ENCODE measurements at regions of chr6 and their contacts with region 1.

Region 1: GRCh38 chr6:129498950-129499842 is 210.8 kb downstream of the ARHGAP18 start:
- DNase-seq: peak in 6 of 35 experiments; percentile 2 to 78 (median 9)
- ATAC-seq: peak; percentile 72 to 80 (median 74)
- H3K4me3 ChIP-seq: no peak overlapping the region
- H3K4me3 Mint-ChIP-seq: peak overlapping the region; percentile 28 to 64 (median 48)
- H3K27ac ChIP-seq: no peak overlapping the region
- H3K27ac Mint-ChIP-seq: peak overlapping the region in 1 of 2 donors; percentile 15
- H3K4me1 ChIP-seq: peaks cover 2 to 14% of the 10 kb centered on the region in 2 experiments
- H3K4me1 Mint-ChIP-seq: peaks cover 9 to 28% (median 22%) of the 10 kb centered on the region in 3 donors
- H3K27me3 ChIP-seq: no peaks in the 10 kb centered on the region
- H3K27me3 Mint-ChIP-seq: no peaks in the 10 kb centered on the region

Region 2: GRCh38 chr6:129140526-129140925 is 358.7 kb before region 1 on chr6:
- CTCF ChIA-PET with region 1: no interaction called
- POLR2A ChIA-PET with region 1: no interaction called
- DNase-seq: no peak
- ATAC-seq: no peak
- H3K4me3 ChIP-seq: no peak overlapping the region
- H3K4me3 Mint-ChIP-seq: no peak overlapping the region
- H3K27ac ChIP-seq: no peak overlapping the region
- H3K27ac Mint-ChIP-seq: no peak overlapping the region
- H3K4me1 ChIP-seq: no peaks in the 10 kb centered on the region
- H3K4me1 Mint-ChIP-seq: no peaks in the 10 kb centered on the region
- H3K27me3 ChIP-seq: no peaks in the 10 kb centered on the region
- H3K27me3 Mint-ChIP-seq: peaks cover 4 to 6% of the 10 kb centered on the region in 2 donors

Region 3: DNA sequence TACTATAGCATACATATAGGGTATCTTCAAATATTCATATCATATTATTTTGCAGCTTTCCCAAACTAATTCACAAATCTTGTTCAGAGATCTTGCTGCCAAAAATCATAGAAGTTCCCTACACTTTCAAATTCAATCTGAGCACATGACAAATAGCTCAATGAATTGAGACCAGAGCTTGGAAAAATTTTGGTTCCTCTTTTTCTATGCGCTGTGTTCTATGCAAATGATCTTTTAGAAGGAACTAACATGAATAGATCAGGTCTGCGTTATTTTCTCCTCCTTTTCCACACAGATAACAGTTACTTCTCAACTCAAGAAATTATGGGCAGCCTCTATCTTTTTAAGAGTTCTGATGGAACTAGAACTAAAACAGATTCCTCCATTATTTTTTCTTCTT is 105.5 kb before region 1 on chr6:
- CTCF ChIA-PET with region 1: no interaction called
- POLR2A ChIA-PET with region 1: no interaction called
- DNase-seq: no peak
- ATAC-seq: no peak
- H3K4me3 ChIP-seq: no peak overlapping the region
- H3K4me3 Mint-ChIP-seq: no peak overlapping the region
- H3K27ac ChIP-seq: no peak overlapping the region
- H3K27ac Mint-ChIP-seq: no peak overlapping the region
- H3K4me1 ChIP-seq: no peaks in the 10 kb centered on the region
- H3K4me1 Mint-ChIP-seq: no peaks in the 10 kb centered on the region
- H3K27me3 ChIP-seq: peaks cover 0 to 2% of the 10 kb centered on the region in 2 experiments
- H3K27me3 Mint-ChIP-seq: peaks cover 0 to 10% of the 10 kb centered on the region in 2 donors

Region 4: DNA sequence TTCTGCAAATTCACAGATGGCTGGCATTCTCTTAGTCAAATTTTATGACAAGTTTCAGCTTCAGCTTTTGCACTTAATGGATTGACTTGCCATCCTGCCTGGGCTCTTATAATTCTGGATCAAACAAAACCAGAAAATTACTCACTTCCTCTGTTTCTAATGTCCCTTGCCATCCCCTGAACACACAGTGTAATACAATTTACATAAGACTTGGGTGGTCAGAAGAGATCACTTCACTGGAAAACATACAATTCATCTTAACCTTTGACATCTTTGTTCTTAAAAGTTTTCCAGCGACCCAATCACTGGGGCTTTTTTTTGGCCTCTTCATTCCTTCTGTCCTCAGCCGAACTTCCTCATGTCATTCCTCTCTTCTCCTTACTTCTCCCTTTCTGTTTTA is 11.8 kb after region 1 on chr6:
- CTCF ChIA-PET with region 1: interaction called in 1 of 2 experiments, 10 read pairs
- POLR2A ChIA-PET with region 1: no interaction called
- DNase-seq: no peak
- ATAC-seq: no peak
- H3K4me3 ChIP-seq: no peak overlapping the region
- H3K4me3 Mint-ChIP-seq: no peak overlapping the region
- H3K27ac ChIP-seq: no peak overlapping the region
- H3K27ac Mint-ChIP-seq: no peak overlapping the region
- H3K4me1 ChIP-seq: no peaks in the 10 kb centered on the region
- H3K4me1 Mint-ChIP-seq: no peaks in the 10 kb centered on the region
- H3K27me3 ChIP-seq: no peaks in the 10 kb centered on the region
- H3K27me3 Mint-ChIP-seq: peaks cover 0 to 3% of the 10 kb centered on the region in 2 donors

Region 5: GRCh38 chr6:130020907-130021629 is 521.9 kb after region 1 on chr6:
- CTCF ChIA-PET with region 1: interaction called, 4 to 22 read pairs
- POLR2A ChIA-PET with region 1: no interaction called
- DNase-seq: peak; percentile 45 to 92 (median 72)
- ATAC-seq: peak; percentile 52 to 60 (median 56)
- H3K4me3 ChIP-seq: peak overlapping the region; percentile 83 to 87
- H3K4me3 Mint-ChIP-seq: peak overlapping the region; percentile 96 to 100 (median 98)
- H3K27ac ChIP-seq: peak overlapping the region; percentile 89
- H3K27ac Mint-ChIP-seq: peak overlapping the region; percentile 97
- H3K4me1 ChIP-seq: peaks cover 6 to 9% of the 10 kb centered on the region in 2 experiments
- H3K4me1 Mint-ChIP-seq: peaks cover 44 to 46% (median 44%) of the 10 kb centered on the region in 3 donors
- H3K27me3 ChIP-seq: no peaks in the 10 kb centered on the region
- H3K27me3 Mint-ChIP-seq: no peaks in the 10 kb centered on the region

Measured in T-cell (primary cell).